ENCODE measurements at regions of chr5 and their contacts with region 1.

Region 1: DNA sequence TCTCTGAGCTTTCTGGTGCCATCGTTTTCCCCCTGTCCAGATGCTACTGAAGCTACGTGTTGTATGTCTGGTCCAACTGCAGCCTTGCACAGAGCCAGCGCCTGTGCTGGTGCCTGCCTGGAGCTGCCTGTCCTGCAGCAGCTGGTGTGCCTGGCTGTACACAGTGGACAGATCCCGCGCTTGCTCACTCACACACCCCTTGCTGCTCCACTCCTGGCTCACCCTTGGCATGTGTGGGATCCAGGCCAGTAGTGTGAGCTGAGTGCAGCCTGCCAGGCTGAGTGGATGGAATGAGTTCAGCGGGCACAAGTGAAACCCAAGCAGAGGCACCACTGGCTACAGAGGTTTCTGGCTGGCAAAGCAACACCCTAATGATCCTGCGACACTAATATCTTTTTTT is 40.4 kb downstream of the FER start:
- DNase-seq: no peak
- H3K4me3 ChIP-seq: no peak overlapping the region
- H3K27ac ChIP-seq: no peak overlapping the region
- H3K4me1 ChIP-seq: 0 out of 2 replicates have a peak, but pooled peaks cover 4% of the 10 kb centered on the region
- H3K27me3 ChIP-seq: no peaks in the 10 kb centered on the region
- CTCF ChIP-seq: no peak

Region 2: GRCh38 chr5:108801776-108802175 is 13.6 kb after region 1 on chr5:
- CTCF ChIA-PET with region 1: no interaction called
- POLR2A ChIA-PET with region 1: interaction called, 11 read pairs
- intact Hi-C with region 1: no loop called
- DNase-seq: peak; percentile 4 to 74
- H3K4me3 ChIP-seq: no peak overlapping the region
- H3K27ac ChIP-seq: peak overlapping the region; percentile 39; the same call in 1 of the 2 replicates
- H3K4me1 ChIP-seq: peaks cover 8% of the 10 kb centered on the region
- H3K27me3 ChIP-seq: no peaks in the 10 kb centered on the region
- CTCF ChIP-seq: no peak

Region 3: DNA sequence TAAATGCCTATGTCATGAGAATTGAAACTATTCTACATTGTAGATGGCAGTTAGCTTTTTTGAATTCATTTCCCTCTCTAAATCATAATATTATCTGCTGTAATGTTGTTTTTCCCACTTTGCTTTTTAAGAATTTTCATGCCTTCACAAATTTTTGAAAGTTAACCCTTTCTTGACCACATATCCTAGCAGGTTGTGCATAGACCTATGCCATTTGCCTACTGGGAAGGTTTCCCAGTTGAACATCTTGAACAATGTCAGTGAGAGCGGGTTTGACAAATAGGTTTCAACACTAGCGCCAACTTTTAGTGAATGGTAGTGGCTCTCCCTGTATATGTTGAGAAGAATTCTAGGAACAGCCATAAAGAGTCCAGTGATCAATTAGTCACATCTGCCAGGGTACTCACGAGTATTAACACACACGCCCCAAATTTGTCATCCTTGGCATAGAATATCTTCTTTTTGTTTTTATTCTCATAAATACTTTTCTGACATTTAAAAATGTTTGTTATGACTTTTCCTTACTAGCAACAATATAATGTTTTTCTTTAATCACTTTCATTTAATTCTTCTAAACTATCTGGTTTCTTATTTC is 314.1 kb after region 1 on chr5:
- CTCF ChIA-PET with region 1: no interaction called
- POLR2A ChIA-PET with region 1: no interaction called
- intact Hi-C with region 1: no loop called
- DNase-seq: no peak
- H3K4me3 ChIP-seq: no peak overlapping the region
- H3K27ac ChIP-seq: no peak overlapping the region
- H3K4me1 ChIP-seq: no peaks in the 10 kb centered on the region
- H3K27me3 ChIP-seq: no peaks in the 10 kb centered on the region
- CTCF ChIP-seq: no peak

Region 4: GRCh38 chr5:109695005-109695926 is 907.1 kb after region 1 on chr5:
- CTCF ChIA-PET with region 1: no interaction called
- POLR2A ChIA-PET with region 1: no interaction called
- intact Hi-C with region 1: no loop called
- DNase-seq: no peak
- H3K4me3 ChIP-seq: no peak overlapping the region
- H3K27ac ChIP-seq: peak overlapping the region; percentile 49; the same call in 1 of the 2 replicates
- H3K4me1 ChIP-seq: peaks cover 35% of the 10 kb centered on the region
- H3K27me3 ChIP-seq: no peaks in the 10 kb centered on the region
- CTCF ChIP-seq: no peak

Measured in PC-9 (cell line).